CD8-positive, alpha-beta memory T cell (primary cell): ENCODE measurements at regions of chr21 and their contacts with region 1.

Region 1: GRCh38 chr21:38734646-38735360 is 70.9 kb upstream of the ETS2 start:
- DNase-seq: no peak
- H3K4me3 ChIP-seq: no peak overlapping the region
- H3K4me3 Mint-ChIP-seq: peak overlapping the region in 5 of 7 donors; percentile 50 to 86 (median 66)
- H3K27ac ChIP-seq: no peak overlapping the region
- H3K27ac Mint-ChIP-seq: no peak overlapping the region
- H3K4me1 ChIP-seq: peaks cover 7% of the 10 kb centered on the region
- H3K4me1 Mint-ChIP-seq: peaks cover 7 to 13% (median 10%) of the 10 kb centered on the region in 3 donors
- H3K27me3 ChIP-seq: peaks cover 11% of the 10 kb centered on the region
- H3K27me3 Mint-ChIP-seq: peaks cover 22 to 41% of the 10 kb centered on the region in 2 donors

Region 2: GRCh38 chr21:38744861-38745260 is 10.1 kb after region 1 on chr21:
- CTCF ChIA-PET with region 1: no interaction called
- POLR2A ChIA-PET with region 1: no interaction called
- DNase-seq: no peak
- H3K4me3 ChIP-seq: no peak overlapping the region
- H3K4me3 Mint-ChIP-seq: no peak overlapping the region
- H3K27ac ChIP-seq: no peak overlapping the region
- H3K27ac Mint-ChIP-seq: no peak overlapping the region
- H3K4me1 ChIP-seq: peaks cover 11% of the 10 kb centered on the region
- H3K4me1 Mint-ChIP-seq: peaks cover 16 to 20% (median 16%) of the 10 kb centered on the region in 3 donors
- H3K27me3 ChIP-seq: no peaks in the 10 kb centered on the region
- H3K27me3 Mint-ChIP-seq: peaks cover 5 to 18% of the 10 kb centered on the region in 2 donors

Region 3: GRCh38 chr21:39137248-39138178 is 402.7 kb after region 1 on chr21:
- CTCF ChIA-PET with region 1: interaction called, 13 read pairs
- POLR2A ChIA-PET with region 1: no interaction called
- DNase-seq: no peak
- H3K4me3 ChIP-seq: no peak overlapping the region
- H3K4me3 Mint-ChIP-seq: no peak overlapping the region
- H3K27ac ChIP-seq: no peak overlapping the region
- H3K27ac Mint-ChIP-seq: no peak overlapping the region
- H3K4me1 ChIP-seq: no peaks in the 10 kb centered on the region
- H3K4me1 Mint-ChIP-seq: no peaks in the 10 kb centered on the region
- H3K27me3 ChIP-seq: no peaks in the 10 kb centered on the region
- H3K27me3 Mint-ChIP-seq: peaks cover 1 to 7% of the 10 kb centered on the region in 2 donors